Right cardiac atrium (tissue), 5 donors: ENCODE measurements at regions of chr5 and their contacts with region 1.

Region 1: DNA sequence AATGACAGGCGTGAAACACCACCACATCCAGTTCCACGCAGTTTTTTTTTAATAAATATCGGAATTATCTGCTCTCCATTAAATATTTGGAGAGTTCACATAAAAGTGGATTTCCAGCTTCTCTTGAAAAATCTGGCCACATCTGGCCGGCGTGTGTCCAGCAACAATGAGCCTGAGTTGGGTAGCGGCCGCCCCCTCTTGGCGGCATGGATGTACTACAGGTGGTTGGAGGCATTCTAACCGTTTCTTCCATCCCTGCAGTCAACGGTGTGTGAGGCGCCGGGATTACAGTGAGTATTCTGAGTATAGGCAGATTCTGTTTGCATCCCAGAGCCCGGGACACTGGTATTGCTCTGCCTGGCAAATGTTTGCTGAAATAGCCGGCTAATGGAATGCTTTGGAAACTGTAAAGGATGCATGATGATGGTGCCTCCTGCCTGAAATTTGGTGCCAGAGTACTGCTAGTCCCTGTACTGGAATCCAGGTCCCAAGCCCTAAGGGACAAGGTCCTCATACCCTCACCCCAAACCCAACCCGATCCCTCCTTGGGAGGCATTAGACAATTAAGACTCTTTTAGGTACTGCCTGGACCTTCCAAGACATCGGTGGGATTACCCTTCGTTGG is 13.6 kb upstream of the GM2A start:
- DNase-seq: peak; percentile 81 to 94 (median 92)
- ATAC-seq: peak; percentile 68 to 73
- H3K4me3 ChIP-seq: peak overlapping the region; percentile 18
- H3K27ac ChIP-seq: peak overlapping the region; percentile 14
- H3K4me1 ChIP-seq: peaks cover 6% of the 10 kb centered on the region
- H3K27me3 ChIP-seq: no peaks in the 10 kb centered on the region

Region 2: GRCh38 chr5:151051066-151051930 is 188.1 kb before region 1 on chr5:
- intact Hi-C with region 1: loop called in 2 of 4 experiments (anchors 10 kb)
- DNase-seq: peak; percentile 84 to 94 (median 91)
- ATAC-seq: peak; percentile 81 to 88
- H3K4me3 ChIP-seq: no peak overlapping the region
- H3K27ac ChIP-seq: no peak overlapping the region
- H3K4me1 ChIP-seq: peaks cover 5% of the 10 kb centered on the region
- H3K27me3 ChIP-seq: no peaks in the 10 kb centered on the region

Region 3: GRCh38 chr5:151126199-151126645 is 113.1 kb before region 1 on chr5:
- intact Hi-C with region 1: loop called (anchors 5 to 10 kb)
- DNase-seq: peak; percentile 74 to 92 (median 91)
- ATAC-seq: peak; percentile 50 to 73
- H3K4me3 ChIP-seq: no peak overlapping the region
- H3K27ac ChIP-seq: no peak overlapping the region
- H3K4me1 ChIP-seq: no peaks in the 10 kb centered on the region
- H3K27me3 ChIP-seq: no peaks in the 10 kb centered on the region

Region 4: DNA sequence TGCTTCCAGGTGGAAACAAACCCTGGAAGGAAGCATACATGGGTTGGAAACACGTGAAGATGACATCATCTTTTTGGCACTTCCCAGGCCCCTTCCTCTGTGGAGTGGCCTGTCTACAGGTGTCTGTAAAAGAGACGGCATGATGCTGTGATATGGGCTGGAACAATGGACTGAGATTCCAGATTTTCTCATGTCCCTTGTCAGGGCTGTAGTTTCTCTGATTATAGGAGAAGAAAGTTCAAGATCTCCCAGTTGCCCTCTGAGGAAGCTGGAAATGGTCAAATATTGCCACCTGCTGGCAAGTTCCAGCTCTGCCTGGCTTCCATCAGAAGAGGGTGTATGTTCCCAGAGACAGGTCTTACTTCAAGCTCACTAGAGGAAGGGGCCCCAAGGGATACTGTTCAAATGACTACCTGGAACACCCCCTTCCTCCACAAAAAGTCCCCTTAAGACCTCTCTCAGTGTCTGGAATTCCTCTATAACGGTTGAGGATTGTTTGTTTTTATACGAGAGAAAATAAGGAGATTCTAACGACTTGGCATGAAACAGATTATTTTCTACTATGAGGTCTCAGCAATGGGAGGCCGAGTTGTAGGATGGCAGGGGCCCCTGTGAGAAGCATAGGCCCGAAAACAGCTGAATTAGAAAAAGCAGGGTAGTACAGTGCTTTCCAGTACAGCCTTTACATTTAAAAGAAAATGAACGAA is 74.5 kb before region 1 on chr5:
- intact Hi-C with region 1: loop called in 2 of 4 experiments (anchors 5 to 10 kb)
- DNase-seq: peak; percentile 61 to 88 (median 83)
- ATAC-seq: peak; percentile 87 to 89
- H3K4me3 ChIP-seq: no peak overlapping the region
- H3K27ac ChIP-seq: no peak overlapping the region
- H3K4me1 ChIP-seq: peaks cover 3% of the 10 kb centered on the region
- H3K27me3 ChIP-seq: no peaks in the 10 kb centered on the region

Region 5: DNA sequence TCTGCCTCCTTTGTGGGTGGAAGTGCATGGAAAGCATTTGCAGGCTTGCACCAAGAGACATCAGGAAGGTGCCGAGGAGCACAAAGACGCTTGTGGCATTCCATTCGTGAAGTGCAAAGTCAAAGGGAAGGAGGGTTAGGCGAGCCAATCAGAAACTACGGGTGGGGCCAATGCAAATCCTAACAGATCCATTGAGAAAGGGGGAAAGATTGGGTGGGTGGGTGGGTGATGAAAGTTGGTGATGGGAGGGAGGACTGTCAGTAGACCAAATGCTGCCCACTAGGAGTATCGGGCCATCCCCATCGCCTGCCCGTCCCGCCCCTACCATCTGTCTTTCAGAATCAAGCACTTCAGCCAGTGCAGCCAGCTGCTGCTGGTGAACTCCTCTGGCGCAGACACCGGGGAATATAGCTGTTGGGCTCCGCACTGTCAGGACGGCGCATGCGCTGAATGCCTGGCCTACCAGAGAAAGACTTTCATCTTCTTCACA is 64.7 kb before region 1 on chr5:
- intact Hi-C with region 1: loop called in 2 of 4 experiments (anchors 5 to 10 kb)
- DNase-seq: peak; percentile 46 to 79 (median 64)
- ATAC-seq: peak; percentile 59 to 62
- H3K4me3 ChIP-seq: no peak overlapping the region
- H3K27ac ChIP-seq: peak overlapping the region; percentile 12
- H3K4me1 ChIP-seq: peaks cover 3% of the 10 kb centered on the region
- H3K27me3 ChIP-seq: no peaks in the 10 kb centered on the region

Region 6: DNA sequence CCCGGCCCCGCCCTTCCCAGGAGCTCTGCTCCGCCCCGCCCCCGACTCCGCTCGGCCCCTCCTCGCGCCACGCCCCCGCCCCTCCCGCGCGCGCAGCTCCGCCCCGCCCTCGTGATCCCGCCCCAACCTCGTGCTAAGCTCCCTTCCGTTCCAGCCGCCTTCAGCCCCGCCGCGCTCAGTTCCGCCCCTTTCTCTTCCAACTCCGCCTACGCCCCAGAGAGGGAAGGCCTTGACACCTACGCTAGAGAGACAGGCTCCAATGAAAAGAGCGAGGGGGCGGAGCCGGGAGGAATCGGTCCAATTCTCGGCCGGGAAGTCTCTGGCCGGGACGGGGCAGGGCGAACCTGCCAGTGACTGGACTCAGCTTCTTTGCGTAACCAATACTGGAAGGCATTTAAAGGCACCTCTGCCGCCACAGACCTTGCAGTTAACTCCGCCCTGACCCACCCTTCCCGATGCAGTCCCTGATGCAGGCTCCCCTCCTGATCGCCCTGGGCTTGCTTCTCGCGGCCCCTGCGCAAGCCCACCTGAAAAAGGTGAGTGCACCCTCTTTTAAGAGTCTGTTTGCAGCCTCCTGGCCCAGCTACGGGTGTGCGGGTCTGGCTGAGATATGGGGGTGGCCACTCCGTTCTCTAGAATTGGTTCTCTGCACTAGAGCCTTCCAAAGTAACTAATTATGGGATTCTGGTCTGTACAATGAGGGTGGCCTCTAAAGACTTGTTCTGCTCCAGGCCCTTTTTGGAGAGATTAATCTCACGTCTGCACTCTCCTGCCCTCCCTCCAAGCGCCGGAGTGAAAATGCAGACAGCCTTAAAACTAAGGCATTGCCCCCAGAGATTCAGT is 13.6 kb after region 1 on chr5 and contains the start of gene GM2A:
- intact Hi-C with region 1: no loop called
- DNase-seq: peak; percentile 99 to 100 (median 99)
- ATAC-seq: peak; percentile 97
- H3K4me3 ChIP-seq: peak within 1 kb of the TSS; percentile 88
- H3K27ac ChIP-seq: peak within 1 kb of the TSS; percentile 86
- H3K4me1 ChIP-seq: peaks cover 5% of the 10 kb centered on the region
- H3K27me3 ChIP-seq: no peaks in the 10 kb centered on the region
- total RNA-seq, gene GM2A: 30.1 to 43.4 (median 35.3) TPM